GM12878 (cell line): ENCODE measurements at regions of chr11 and their contacts with region 1.

Region 1: GRCh38 chr11:74948898-74949747 is at the starts of genes SPCS2 and XRRA1:
- DNase-seq: peak; percentile 96
- ATAC-seq: peak; percentile 94
- H3K4me3 ChIP-seq: peak within 1 kb of the TSS; percentile 88
- H3K27ac ChIP-seq: peak within 1 kb of the TSS; percentile 92
- H3K4me1 ChIP-seq: peaks cover 17% of the 10 kb centered on the region
- H3K27me3 ChIP-seq: no peaks in the 10 kb centered on the region
- CTCF ChIP-seq: no peak
- EP300 ChIP-seq: peak in 1 of 2 experiments; percentile 25; a peak in 1 of 4 replicates
- POLR2A ChIP-seq: peak; percentile 94
- RAD21 ChIP-seq: no peak
- polyA plus RNA-seq, gene SPCS2: 429 to 430 TPM
- polyA plus RNA-seq, gene XRRA1: 2.5 to 7.4 TPM

Region 2: GRCh38 chr11:74988541-74989260 is 39.6 kb after region 1 on chr11 and contains the start of gene NEU3:
- CTCF ChIA-PET with region 1: interaction called, 7 read pairs
- POLR2A ChIA-PET with region 1: interaction called, 5 read pairs
- RAD21 ChIA-PET with region 1: interaction called, 10 read pairs
- SMC1A ChIA-PET with region 1: interaction called, 6 read pairs
- in situ Hi-C with region 1: no loop called
- intact Hi-C with region 1: loop called (anchors 2 kb)
- DNase-seq: peak; percentile 59
- ATAC-seq: peak; percentile 94
- H3K4me3 ChIP-seq: peak within 1 kb of the TSS; percentile 100
- H3K27ac ChIP-seq: peak within 1 kb of the TSS; percentile 45
- H3K4me1 ChIP-seq: peaks cover 13% of the 10 kb centered on the region
- H3K27me3 ChIP-seq: no peaks in the 10 kb centered on the region
- CTCF ChIP-seq: no peak
- EP300 ChIP-seq: no peak
- POLR2A ChIP-seq: peak; percentile 93
- RAD21 ChIP-seq: no peak
- polyA plus RNA-seq, gene NEU3: 2.5 TPM